ENCODE measurements at regions of chr9 and their contacts with region 1.

Region 1: DNA sequence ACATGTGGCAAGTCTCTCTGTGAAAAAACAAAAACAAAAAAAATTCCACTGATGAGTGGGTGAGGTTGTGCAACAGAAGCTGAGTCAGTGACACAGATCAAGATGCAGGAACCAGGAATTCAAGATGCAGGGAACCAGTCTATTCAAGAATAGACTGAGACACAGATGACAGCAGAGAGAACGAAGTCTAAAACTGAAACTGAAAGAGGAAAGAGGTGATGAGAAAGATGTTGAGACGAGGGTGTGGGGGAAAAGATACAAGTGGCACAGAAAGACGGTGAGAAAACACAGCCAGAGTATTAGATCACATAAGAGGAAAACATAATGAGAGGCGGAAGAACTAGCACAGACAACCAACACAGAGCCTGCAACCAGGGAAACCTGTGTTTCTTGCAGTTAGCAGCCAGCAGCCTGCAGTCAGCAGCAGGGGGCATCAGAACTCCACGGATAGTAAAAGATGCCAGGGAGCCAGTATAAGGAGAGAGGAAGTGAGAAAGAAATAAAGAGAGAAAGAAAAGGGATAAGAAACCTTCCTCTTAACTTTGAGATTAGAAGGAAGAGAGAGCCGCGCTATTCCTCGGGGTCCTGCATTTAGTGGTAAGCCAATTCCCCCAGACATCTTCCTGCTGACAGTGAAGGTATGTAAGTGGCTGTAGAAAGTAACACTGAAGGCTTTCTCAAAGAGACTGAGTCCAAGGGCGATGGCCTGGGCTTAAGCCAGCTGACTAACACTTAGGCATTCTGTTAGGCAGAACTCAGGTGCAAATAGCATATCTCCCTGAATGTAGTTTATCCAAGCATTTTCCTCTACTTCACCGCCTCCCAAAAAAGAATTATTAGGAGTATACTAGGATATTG is 79.0 kb downstream of the TLR4 start:
- DNase-seq: peak; percentile 25 to 55
- ATAC-seq: peak; percentile 97 to 98
- H3K4me3 ChIP-seq: peak overlapping the region; percentile 38; the same call in 1 of the 3 replicates
- H3K27ac ChIP-seq: no peak overlapping the region
- H3K4me1 ChIP-seq: no peaks in the 10 kb centered on the region
- CTCF ChIP-seq: peak; percentile 72
- EP300 ChIP-seq: no peak
- POLR2A ChIP-seq: no peak
- RAD21 ChIP-seq: peak; percentile 87

Region 2: GRCh38 chr9:117796681-117797080 is 13.5 kb after region 1 on chr9:
- CTCF ChIA-PET with region 1: interaction called, 13 read pairs
- POLR2A ChIA-PET with region 1: no interaction called
- DNase-seq: no peak
- ATAC-seq: no peak
- H3K4me3 ChIP-seq: no peak overlapping the region
- H3K27ac ChIP-seq: no peak overlapping the region
- H3K4me1 ChIP-seq: no peaks in the 10 kb centered on the region
- CTCF ChIP-seq: no peak
- EP300 ChIP-seq: no peak
- POLR2A ChIP-seq: no peak
- RAD21 ChIP-seq: no peak

Measured in A549 (cell line).